Endothelial cell of umbilical vein (primary cell): ENCODE measurements at regions of chr10 and their contacts with region 1.

Region 1: GRCh38 chr10:49592726-49593563 is 17.2 kb upstream of the SLC18A3 start:
- DNase-seq: peak; percentile 58
- H3K4me3 ChIP-seq: no peak overlapping the region
- H3K27ac ChIP-seq: no peak overlapping the region
- H3K4me1 ChIP-seq: peaks cover 3% of the 10 kb centered on the region
- H3K27me3 ChIP-seq: no peaks in the 10 kb centered on the region
- CTCF ChIP-seq: peak; percentile 89 to 99
- POLR2A ChIP-seq: no peak

Region 2: GRCh38 chr10:49379596-49380410 is 213.1 kb before region 1 on chr10:
- CTCF ChIA-PET with region 1: no interaction called
- POLR2A ChIA-PET with region 1: no interaction called
- dilution Hi-C with region 1: no loop called
- intact Hi-C with region 1: no loop called
- DNase-seq: no peak
- H3K4me3 ChIP-seq: no peak overlapping the region
- H3K27ac ChIP-seq: no peak overlapping the region
- H3K4me1 ChIP-seq: no peaks in the 10 kb centered on the region
- H3K27me3 ChIP-seq: peaks cover 2 to 6% of the 10 kb centered on the region in 2 experiments
- CTCF ChIP-seq: peak in 1 of 2 donors; percentile 27
- POLR2A ChIP-seq: no peak

Region 3: GRCh38 chr10:49552249-49552672 is 40.7 kb before region 1 on chr10:
- CTCF ChIA-PET with region 1: interaction called, 28 read pairs
- POLR2A ChIA-PET with region 1: interaction called, 3 read pairs
- dilution Hi-C with region 1: no loop called
- intact Hi-C with region 1: no loop called
- DNase-seq: peak; percentile 83
- H3K4me3 ChIP-seq: peak overlapping the region in 1 of 3 experiments; percentile 32
- H3K27ac ChIP-seq: peak overlapping the region; percentile 99
- H3K4me1 ChIP-seq: peaks cover 42% of the 10 kb centered on the region
- H3K27me3 ChIP-seq: no peaks in the 10 kb centered on the region
- CTCF ChIP-seq: no peak
- POLR2A ChIP-seq: no peak

Region 4: DNA sequence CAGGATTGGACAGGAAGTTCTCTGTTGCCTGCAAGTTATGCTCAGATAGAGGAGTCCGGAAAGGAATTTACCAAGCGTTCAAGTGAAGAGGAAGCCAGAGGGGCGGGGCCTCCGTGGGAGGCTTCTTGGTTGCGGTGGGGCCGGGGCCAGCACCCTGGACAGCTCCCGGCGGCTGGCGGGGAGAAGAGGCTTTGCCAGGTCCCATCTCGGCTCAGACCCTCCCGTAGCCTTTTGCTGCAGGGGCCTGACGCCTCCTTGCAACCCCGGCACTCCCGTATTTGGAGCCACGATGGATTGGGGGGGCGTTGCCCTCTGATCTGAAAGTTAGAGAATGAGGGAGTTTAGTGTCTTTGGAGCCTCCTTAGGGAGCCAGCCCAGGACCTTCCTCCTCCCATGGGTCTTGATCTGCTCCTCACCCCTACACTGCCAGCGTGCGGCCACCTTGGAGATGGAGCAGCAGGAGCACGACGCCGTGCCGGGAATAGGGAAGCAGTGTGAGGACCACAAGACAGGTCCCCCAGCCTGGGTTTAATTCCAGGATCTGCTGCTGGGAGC is 14.1 kb after region 1 on chr10:
- CTCF ChIA-PET with region 1: interaction called, 10 read pairs
- POLR2A ChIA-PET with region 1: no interaction called
- dilution Hi-C with region 1: no loop called
- intact Hi-C with region 1: no loop called
- DNase-seq: peak; percentile 60
- H3K4me3 ChIP-seq: no peak overlapping the region
- H3K27ac ChIP-seq: no peak overlapping the region
- H3K4me1 ChIP-seq: no peaks in the 10 kb centered on the region
- H3K27me3 ChIP-seq: peaks cover 41 to 48% of the 10 kb centered on the region in 2 experiments
- CTCF ChIP-seq: no peak
- POLR2A ChIP-seq: no peak

Region 5: GRCh38 chr10:50224330-50224952 is 631.5 kb after region 1 on chr10:
- CTCF ChIA-PET with region 1: interaction called, 47 read pairs
- POLR2A ChIA-PET with region 1: no interaction called
- dilution Hi-C with region 1: no loop called
- intact Hi-C with region 1: loop called (anchors 1 kb)
- DNase-seq: peak; percentile 55
- H3K4me3 ChIP-seq: no peak overlapping the region
- H3K27ac ChIP-seq: no peak overlapping the region
- H3K4me1 ChIP-seq: no peaks in the 10 kb centered on the region
- H3K27me3 ChIP-seq: peaks cover 2 to 23% of the 10 kb centered on the region in 2 experiments
- CTCF ChIP-seq: peak; percentile 37 to 52
- POLR2A ChIP-seq: no peak

Region 6: GRCh38 chr10:50896721-50897120 is 1303.8 kb after region 1 on chr10:
- CTCF ChIA-PET with region 1: no interaction called
- POLR2A ChIA-PET with region 1: no interaction called
- dilution Hi-C with region 1: no loop called
- intact Hi-C with region 1: loop called (anchors 10 kb)
- DNase-seq: no peak
- H3K4me3 ChIP-seq: no peak overlapping the region
- H3K27ac ChIP-seq: no peak overlapping the region
- H3K4me1 ChIP-seq: no peaks in the 10 kb centered on the region
- H3K27me3 ChIP-seq: peaks cover 9 to 11% of the 10 kb centered on the region in 2 experiments
- CTCF ChIP-seq: no peak
- POLR2A ChIP-seq: no peak